IMR-90 (cell line): ENCODE measurements at regions of chr10 and their contacts with region 1.

Region 1: DNA sequence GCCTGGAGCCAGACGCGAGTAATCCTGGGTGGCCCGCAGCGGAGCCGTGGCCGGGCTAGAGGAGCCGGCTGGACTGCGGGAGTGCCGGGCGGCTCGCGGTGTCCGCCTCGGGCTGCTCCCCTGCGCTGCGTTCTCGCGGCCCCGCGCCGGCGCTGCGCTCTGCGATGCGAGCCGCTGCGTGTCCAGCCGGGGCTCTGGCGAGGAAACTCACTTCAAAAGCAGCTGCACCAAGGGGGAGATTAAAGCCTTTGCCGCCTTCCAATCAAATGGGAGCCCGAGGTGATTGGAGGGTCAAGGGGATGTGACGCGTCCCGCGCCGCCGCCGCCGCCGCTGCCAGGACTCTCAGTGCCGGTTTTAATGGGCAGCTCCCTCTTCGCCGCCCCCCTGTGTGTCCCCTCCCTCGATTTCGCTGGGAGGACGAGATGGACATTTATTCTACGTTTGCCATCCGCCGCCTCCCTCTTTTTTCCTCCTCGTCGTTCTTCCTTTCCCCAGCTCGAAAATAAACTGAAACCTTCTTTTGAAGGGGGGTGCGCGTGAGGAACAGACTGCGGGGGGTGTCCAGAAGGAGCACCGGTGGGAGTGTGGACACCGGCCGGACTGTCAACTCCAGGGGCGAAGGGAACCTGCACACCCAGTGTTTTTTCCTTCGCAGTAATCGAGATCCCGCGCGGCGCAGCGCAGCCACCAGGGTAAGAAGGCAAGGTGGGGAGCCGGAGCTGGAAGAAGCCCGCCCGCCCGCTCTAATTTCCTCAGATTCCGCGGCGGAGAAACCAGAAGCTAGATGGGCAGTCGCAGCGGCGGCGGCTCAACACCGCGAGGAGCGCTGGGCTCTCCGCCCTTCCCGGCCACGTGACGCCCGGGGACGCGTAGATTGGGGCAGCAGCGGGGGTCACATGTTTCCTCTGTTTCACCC is at the start of gene ZNF503:
- DNase-seq: peak; percentile 97
- ATAC-seq: peak; percentile 67
- H3K4me3 ChIP-seq: peak within 1 kb of the TSS; percentile 99
- H3K27ac ChIP-seq: peak within 1 kb of the TSS; percentile 100
- H3K4me1 ChIP-seq: peaks cover 2% of the 10 kb centered on the region; the same call in 1 of the 2 replicates
- H3K27me3 ChIP-seq: 0 out of 2 replicates have a peak, but pooled peaks cover 3% of the 10 kb centered on the region
- CTCF ChIP-seq: 0 out of 2 replicates have a peak, but pooled peaks have one; percentile 6
- POLR2A ChIP-seq: peak; percentile 99
- RAD21 ChIP-seq: peak; percentile 26
- total RNA-seq, gene ZNF503: 0.36 and 0.83 TPM in 2 replicates

Region 2: DNA sequence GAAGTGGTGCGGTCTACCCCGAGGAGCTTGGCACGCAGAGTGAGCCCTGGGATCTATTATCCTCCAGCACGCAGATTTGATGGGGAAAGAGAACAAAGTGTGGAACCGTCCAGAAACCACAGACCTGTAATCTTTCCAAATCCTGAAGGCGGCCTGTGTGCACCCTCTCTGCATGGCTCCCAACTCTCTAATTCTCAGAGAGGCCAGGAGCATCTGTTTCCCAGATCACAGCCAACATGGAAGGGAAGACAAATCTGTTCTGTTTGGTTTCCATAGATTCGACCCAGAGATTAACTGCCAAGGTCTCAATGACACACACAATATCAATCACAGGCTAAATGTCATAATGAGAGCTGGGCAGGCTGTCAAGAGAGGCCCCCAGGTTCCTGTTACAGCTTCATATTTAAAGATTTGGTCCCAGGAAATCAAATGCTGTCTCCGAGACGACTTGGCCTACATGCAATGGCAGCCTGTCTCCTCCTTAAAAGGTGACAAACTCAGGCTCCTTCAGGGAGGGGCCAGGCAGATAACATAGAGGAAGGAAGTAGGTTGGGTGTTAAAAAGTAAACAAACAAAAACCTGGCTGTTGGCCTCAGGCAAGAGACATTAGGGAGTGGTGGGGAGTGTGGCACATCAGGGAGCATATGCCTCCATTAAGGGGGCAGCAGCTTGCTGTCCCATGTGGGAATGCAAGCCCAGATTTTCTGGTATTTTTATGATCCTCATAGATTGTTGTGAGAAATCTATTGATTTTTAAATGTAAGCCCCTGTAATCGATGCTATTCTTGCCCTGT is 339.1 kb before region 1 on chr10:
- CTCF ChIA-PET with region 1: no interaction called
- POLR2A ChIA-PET with region 1: no interaction called
- dilution Hi-C with region 1: no loop called
- in situ Hi-C with region 1: no loop called
- intact Hi-C with region 1: no loop called
- DNase-seq: peak; percentile 11
- ATAC-seq: no peak
- H3K4me3 ChIP-seq: no peak overlapping the region
- H3K27ac ChIP-seq: no peak overlapping the region
- H3K4me1 ChIP-seq: peaks cover 3% of the 10 kb centered on the region
- H3K27me3 ChIP-seq: no peaks in the 10 kb centered on the region
- CTCF ChIP-seq: no peak
- POLR2A ChIP-seq: no peak
- RAD21 ChIP-seq: no peak

Region 3: DNA sequence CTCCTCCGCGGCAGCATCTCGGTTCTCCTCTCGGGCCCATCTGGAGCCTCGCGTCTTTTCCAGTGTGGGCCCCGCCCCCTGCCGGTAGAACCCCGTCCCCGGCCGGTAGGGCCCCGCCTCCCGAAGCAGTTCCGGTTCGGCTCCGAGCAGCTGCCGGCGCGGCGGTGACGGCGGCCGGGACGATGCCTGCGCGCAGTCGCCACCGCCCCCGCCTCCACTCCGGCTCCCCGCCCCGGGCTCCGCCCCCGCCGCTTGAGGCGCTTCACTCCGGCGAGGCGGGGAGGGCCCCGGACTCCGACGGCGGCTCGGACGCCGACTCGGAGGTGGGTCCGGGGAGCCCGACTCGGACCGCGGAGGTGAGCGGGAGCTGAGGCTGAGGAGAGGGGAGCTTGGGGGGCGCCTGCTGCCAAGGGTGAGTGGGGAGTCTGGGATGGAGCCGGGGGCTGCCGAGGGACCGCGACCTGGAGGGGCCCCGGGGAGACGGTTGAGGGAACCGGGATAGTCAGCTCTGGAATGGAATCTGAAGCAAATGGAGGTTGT is 290.4 kb before region 1 on chr10 and contains the start of gene SAMD8:
- CTCF ChIA-PET with region 1: interaction called, 3 read pairs
- POLR2A ChIA-PET with region 1: no interaction called
- dilution Hi-C with region 1: no loop called
- in situ Hi-C with region 1: no loop called
- intact Hi-C with region 1: loop called (anchors 5 kb)
- DNase-seq: peak; percentile 95
- ATAC-seq: peak; percentile 91
- H3K4me3 ChIP-seq: peak within 1 kb of the TSS; percentile 98
- H3K27ac ChIP-seq: peak within 1 kb of the TSS; percentile 96
- H3K4me1 ChIP-seq: peaks cover 2% of the 10 kb centered on the region; the same call in 1 of the 2 replicates
- H3K27me3 ChIP-seq: no peaks in the 10 kb centered on the region
- CTCF ChIP-seq: no peak
- POLR2A ChIP-seq: peak; percentile 90
- RAD21 ChIP-seq: no peak
- total RNA-seq, gene SAMD8: 28.7 and 34.2 TPM in 2 replicates

Region 4: DNA sequence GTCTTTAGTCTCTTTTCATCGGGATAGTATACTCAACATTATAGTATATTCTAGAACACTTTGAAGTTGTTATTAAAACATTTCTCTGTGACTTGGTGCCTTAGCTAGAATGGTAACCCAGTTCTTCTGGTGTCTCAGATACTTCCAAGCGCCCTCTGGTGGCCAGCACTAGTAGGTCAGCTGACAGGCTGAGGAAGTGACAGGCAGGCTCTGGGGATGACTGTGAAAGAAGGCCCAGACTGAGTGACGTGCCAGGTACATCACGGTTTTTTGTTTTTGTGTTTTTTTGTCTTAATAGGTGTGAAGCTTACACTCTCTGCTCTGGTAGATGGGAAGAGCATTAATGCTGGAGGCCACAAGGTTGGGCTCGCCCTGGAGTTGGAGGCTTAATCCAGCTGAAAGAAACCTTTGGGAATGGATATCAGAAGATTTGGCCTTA is 171.2 kb before region 1 on chr10:
- CTCF ChIA-PET with region 1: no interaction called
- POLR2A ChIA-PET with region 1: no interaction called
- dilution Hi-C with region 1: no loop called
- in situ Hi-C with region 1: no loop called
- intact Hi-C with region 1: no loop called
- DNase-seq: peak; percentile 84
- ATAC-seq: peak; percentile 28
- H3K4me3 ChIP-seq: no peak overlapping the region
- H3K27ac ChIP-seq: no peak overlapping the region
- H3K4me1 ChIP-seq: peaks cover 28% of the 10 kb centered on the region
- H3K27me3 ChIP-seq: no peaks in the 10 kb centered on the region
- CTCF ChIP-seq: peak; percentile 84
- POLR2A ChIP-seq: no peak
- RAD21 ChIP-seq: peak; percentile 73

Region 5: DNA sequence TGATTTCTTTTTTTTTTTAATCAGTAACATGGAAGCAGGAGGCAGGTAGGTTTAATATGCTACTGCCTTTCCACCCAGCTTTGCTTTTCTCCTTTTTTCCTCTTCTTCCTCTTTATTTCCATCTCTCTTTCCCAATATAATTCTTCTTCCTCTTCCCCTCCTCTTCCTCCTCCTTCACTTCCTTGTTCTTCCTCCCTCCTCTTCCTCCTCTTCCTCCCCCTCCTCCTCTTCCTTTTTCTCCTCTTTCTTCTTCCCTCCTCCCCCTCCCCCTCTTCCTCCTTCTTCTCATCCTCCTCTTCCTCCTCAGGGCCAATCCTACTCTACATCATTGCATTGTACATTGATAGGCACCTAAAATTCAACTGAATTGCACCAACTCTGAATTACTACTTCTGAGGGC is 11.6 kb before region 1 on chr10:
- CTCF ChIA-PET with region 1: no interaction called
- POLR2A ChIA-PET with region 1: no interaction called
- dilution Hi-C with region 1: no loop called
- in situ Hi-C with region 1: no loop called
- intact Hi-C with region 1: no loop called
- DNase-seq: no peak
- ATAC-seq: no peak
- H3K4me3 ChIP-seq: no peak overlapping the region
- H3K27ac ChIP-seq: no peak overlapping the region
- H3K4me1 ChIP-seq: peaks cover 8% of the 10 kb centered on the region; the same call in 1 of the 2 replicates
- H3K27me3 ChIP-seq: no peaks in the 10 kb centered on the region
- CTCF ChIP-seq: no peak
- POLR2A ChIP-seq: no peak
- RAD21 ChIP-seq: no peak

Region 6: DNA sequence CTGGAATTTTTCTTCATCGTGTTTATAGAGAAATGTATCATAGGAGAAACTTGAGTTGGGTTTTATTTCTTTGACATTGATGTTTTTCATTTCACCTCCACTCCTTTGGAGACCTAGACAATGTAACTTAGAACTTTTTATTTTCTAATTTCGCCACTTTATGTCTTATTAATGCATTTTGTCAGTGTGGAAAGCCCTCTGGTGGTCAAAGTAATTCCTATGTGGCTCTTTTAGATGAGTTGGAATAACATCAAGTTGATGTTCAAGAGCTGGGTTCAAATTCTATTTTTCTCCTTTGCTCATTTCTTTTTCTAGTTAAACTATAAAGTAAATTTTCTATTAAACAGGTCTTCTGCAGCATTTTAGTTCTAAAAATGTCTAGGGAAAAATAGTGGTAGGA is 508.2 kb after region 1 on chr10:
- CTCF ChIA-PET with region 1: interaction called, 4 read pairs
- POLR2A ChIA-PET with region 1: interaction called, 4 read pairs
- dilution Hi-C with region 1: no loop called
- in situ Hi-C with region 1: no loop called
- intact Hi-C with region 1: loop called (anchors 2 kb)
- DNase-seq: peak; percentile 24
- ATAC-seq: peak; percentile 51; the same call in 1 of the 2 replicates
- H3K4me3 ChIP-seq: no peak overlapping the region
- H3K27ac ChIP-seq: no peak overlapping the region
- H3K4me1 ChIP-seq: no peaks in the 10 kb centered on the region
- H3K27me3 ChIP-seq: peaks cover 7% of the 10 kb centered on the region
- CTCF ChIP-seq: peak; percentile 41
- POLR2A ChIP-seq: no peak
- RAD21 ChIP-seq: no peak

Region 7: DNA sequence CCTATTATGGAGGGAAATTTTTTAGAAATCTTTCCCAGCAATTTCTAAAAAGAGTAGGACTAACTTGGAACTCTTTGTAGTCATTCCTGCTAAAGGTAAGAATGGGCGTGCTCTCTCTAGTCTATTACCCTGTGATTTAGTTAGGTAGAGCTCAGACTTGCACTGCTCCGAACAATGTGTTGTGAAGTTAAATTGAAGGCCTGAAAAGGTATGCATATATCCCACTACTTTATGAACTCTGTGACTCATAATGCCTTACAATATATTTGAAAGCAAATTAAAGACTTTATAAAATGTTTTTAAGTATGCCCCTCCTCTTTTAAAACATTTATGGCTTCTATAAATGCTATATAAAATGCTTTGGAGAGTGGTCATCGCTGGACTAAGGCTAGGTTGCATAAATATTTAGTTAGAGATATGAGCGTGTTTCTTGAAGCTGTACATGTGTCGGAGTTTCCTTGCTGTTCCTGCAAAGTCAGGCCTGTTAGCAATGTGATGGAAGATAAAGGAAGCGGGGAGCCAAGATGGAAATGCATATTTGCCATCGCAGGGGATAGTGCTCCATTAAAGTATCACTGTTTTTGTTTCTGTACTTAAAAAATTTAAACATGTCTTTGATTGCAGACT is 791.0 kb after region 1 on chr10:
- CTCF ChIA-PET with region 1: no interaction called
- POLR2A ChIA-PET with region 1: no interaction called
- dilution Hi-C with region 1: no loop called
- in situ Hi-C with region 1: no loop called
- intact Hi-C with region 1: loop called (anchors 1 kb)
- DNase-seq: peak; percentile 83
- ATAC-seq: peak; percentile 86
- H3K4me3 ChIP-seq: no peak overlapping the region
- H3K27ac ChIP-seq: peak overlapping the region; percentile 92
- H3K4me1 ChIP-seq: peaks cover 26% of the 10 kb centered on the region
- H3K27me3 ChIP-seq: no peaks in the 10 kb centered on the region
- CTCF ChIP-seq: no peak
- POLR2A ChIP-seq: no peak
- RAD21 ChIP-seq: no peak

Region 8: DNA sequence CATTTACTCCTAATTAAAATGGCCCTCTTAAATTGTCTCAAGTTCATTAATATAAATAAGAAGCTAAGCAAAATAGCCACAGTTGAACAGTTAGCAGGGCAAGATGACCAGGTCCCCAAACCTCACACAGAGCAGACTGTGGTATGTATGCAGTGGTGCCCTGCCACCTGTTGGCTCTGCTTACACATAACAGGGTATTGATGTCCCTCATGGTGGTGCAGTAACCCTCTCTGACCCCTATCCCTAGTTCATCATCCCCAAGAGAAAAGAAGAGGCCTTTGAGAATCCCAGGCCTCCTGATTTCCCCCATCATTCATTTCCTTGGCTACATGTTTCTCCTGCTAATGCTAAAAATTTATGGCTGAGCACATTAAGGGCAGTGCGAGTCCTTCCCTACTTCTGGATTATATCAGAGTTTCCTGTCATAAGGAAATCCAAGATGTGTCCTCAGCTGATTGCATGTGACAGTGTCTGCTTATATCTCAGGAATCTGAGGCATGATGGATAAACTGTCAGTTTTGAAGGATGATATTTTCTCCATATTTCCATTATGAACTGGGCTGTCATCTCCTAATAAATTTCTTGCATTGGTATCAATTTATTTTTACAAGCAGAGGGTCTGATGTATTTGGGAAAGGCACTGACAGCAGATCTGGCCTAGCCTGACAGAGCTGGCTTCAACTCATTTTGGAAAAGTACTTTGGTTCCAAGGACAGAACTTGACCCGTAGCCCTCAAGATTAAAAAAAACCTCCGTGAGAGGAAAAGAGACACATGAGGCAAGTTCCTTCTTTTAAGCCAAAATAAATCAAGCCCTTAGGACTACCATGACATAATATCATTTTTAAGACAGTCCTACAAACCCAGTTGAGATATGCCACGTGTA is 910.2 kb after region 1 on chr10:
- CTCF ChIA-PET with region 1: no interaction called
- POLR2A ChIA-PET with region 1: no interaction called
- dilution Hi-C with region 1: no loop called
- in situ Hi-C with region 1: loop called (anchors 10 kb)
- intact Hi-C with region 1: loop called (anchors 2 kb)
- DNase-seq: no peak
- ATAC-seq: peak; percentile 52
- H3K4me3 ChIP-seq: no peak overlapping the region
- H3K27ac ChIP-seq: no peak overlapping the region
- H3K4me1 ChIP-seq: peaks cover 7% of the 10 kb centered on the region
- H3K27me3 ChIP-seq: 0 out of 2 replicates have a peak, but pooled peaks cover 2% of the 10 kb centered on the region
- CTCF ChIP-seq: peak; percentile 33; the same call in 1 of the 2 replicates
- POLR2A ChIP-seq: no peak
- RAD21 ChIP-seq: peak; percentile 20; the same call in 1 of the 2 replicates

Region 9: GRCh38 chr10:76558586-76558985 is 1156.8 kb after region 1 on chr10:
- CTCF ChIA-PET with region 1: no interaction called
- POLR2A ChIA-PET with region 1: no interaction called
- dilution Hi-C with region 1: no loop called
- in situ Hi-C with region 1: loop called (anchors 25 kb)
- intact Hi-C with region 1: no loop called
- DNase-seq: peak; percentile 80
- ATAC-seq: peak; percentile 63
- H3K4me3 ChIP-seq: no peak overlapping the region
- H3K27ac ChIP-seq: peak overlapping the region; percentile 48; the same call in 1 of the 2 replicates
- H3K4me1 ChIP-seq: peaks cover 19% of the 10 kb centered on the region
- H3K27me3 ChIP-seq: peaks cover 15% of the 10 kb centered on the region
- CTCF ChIP-seq: no peak
- POLR2A ChIP-seq: no peak
- RAD21 ChIP-seq: no peak

Region 10: GRCh38 chr10:76925636-76926405 is 1524.0 kb after region 1 on chr10:
- CTCF ChIA-PET with region 1: no interaction called
- POLR2A ChIA-PET with region 1: no interaction called
- dilution Hi-C with region 1: no loop called
- in situ Hi-C with region 1: no loop called
- intact Hi-C with region 1: no loop called
- DNase-seq: no peak
- ATAC-seq: no peak
- H3K4me3 ChIP-seq: no peak overlapping the region
- H3K27ac ChIP-seq: no peak overlapping the region
- H3K4me1 ChIP-seq: no peaks in the 10 kb centered on the region
- H3K27me3 ChIP-seq: no peaks in the 10 kb centered on the region
- CTCF ChIP-seq: no peak
- POLR2A ChIP-seq: no peak
- RAD21 ChIP-seq: no peak

Region 11: DNA sequence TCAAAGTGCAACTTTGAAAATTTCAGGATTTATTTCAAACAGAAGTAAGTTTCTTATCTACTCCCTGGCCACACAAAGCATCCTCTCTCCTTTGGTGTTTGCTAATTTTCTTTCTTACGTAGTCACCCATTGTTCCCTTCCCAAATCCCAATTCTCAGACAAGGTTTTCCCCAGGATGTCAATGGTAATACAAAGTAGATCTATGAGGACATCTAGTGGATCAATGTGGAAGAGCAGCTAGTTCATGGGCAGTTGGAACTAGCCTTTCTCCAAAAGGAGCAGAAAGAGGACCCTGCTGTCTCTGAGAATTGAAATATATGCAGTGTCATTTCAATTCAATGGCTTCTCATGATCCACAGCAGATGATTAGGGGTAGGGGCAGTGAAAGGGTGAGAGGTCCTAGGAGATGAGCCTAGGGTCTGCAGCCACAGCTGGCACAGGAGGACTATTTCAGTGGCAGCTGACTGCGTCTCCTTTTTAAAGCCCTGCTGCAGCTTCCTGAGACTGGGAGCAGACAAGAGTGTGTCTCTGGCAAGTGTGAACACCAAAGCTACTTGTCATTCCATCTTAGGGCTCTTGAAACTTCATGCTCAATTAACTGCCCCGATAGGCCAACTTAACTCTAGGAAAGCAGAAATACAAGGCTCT is 1603.2 kb after region 1 on chr10:
- CTCF ChIA-PET with region 1: interaction called, 3 read pairs
- POLR2A ChIA-PET with region 1: no interaction called
- dilution Hi-C with region 1: no loop called
- in situ Hi-C with region 1: no loop called
- intact Hi-C with region 1: loop called (anchors 5 kb)
- DNase-seq: peak; percentile 58
- ATAC-seq: peak; percentile 92
- H3K4me3 ChIP-seq: no peak overlapping the region
- H3K27ac ChIP-seq: no peak overlapping the region
- H3K4me1 ChIP-seq: no peaks in the 10 kb centered on the region
- H3K27me3 ChIP-seq: no peaks in the 10 kb centered on the region
- CTCF ChIP-seq: peak; percentile 74
- POLR2A ChIP-seq: no peak
- RAD21 ChIP-seq: peak; percentile 72